Naive thymus-derived CD4-positive, alpha-beta T cell (primary cell): ENCODE measurements at regions of chrX and their contacts with region 1.

Region 1: DNA sequence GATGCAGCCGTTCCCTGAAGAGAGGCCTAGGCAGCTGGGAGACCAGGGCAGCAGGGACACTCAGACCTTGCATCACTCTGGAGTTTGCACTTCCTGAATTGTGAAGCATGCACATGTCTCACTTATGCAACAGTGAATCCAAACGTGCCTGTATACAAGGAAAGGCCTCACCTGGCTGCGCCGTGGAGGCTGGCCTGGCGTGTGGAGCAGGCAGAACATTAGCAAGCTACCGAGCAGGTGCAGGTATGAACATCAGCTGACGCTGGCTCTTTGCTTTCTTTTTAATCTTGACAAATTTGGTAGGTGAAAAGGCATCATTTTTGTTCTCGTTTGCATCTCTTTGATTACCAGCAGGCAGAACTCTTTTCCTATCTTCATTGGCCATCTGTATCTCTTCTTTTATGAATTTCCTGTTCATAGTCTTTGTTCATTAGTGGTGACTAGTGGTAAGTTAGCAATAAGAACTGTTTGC is 37.1 kb upstream of the IRAK1 start:
- DNase-seq: peak in 6 of 9 donors; percentile 11 to 31 (median 21)
- ATAC-seq: peak; percentile 55
- H3K4me3 ChIP-seq: no peak overlapping the region
- H3K4me3 Mint-ChIP-seq: peak overlapping the region in 7 of 10 donors; percentile 3 to 59 (median 44)
- H3K27ac ChIP-seq: peak overlapping the region; percentile 23
- H3K27ac Mint-ChIP-seq: peak overlapping the region; percentile 34 to 85 (median 61)
- H3K4me1 ChIP-seq: peaks cover 3 to 24% of the 10 kb centered on the region in 2 donors
- H3K4me1 Mint-ChIP-seq: peaks cover 33 to 66% (median 58%) of the 10 kb centered on the region in 7 donors
- H3K27me3 ChIP-seq: no peaks in the 10 kb centered on the region
- H3K27me3 Mint-ChIP-seq: no peaks in the 10 kb centered on the region

Region 2: GRCh38 chrX:153989973-153990655 is 66.7 kb before region 1 on chrX:
- CTCF ChIA-PET with region 1: no interaction called
- POLR2A ChIA-PET with region 1: no interaction called
- intact Hi-C with region 1: no loop called
- DNase-seq: peak in 3 of 9 donors; percentile 33 to 41 (median 35)
- ATAC-seq: peak; percentile 20
- H3K4me3 ChIP-seq: no peak overlapping the region
- H3K4me3 Mint-ChIP-seq: peak overlapping the region in 8 of 10 donors; percentile 39 to 75 (median 62)
- H3K27ac ChIP-seq: peak overlapping the region; percentile 42
- H3K27ac Mint-ChIP-seq: peak overlapping the region; percentile 55 to 91 (median 85)
- H3K4me1 ChIP-seq: peaks cover 2 to 14% of the 10 kb centered on the region in 2 donors
- H3K4me1 Mint-ChIP-seq: peaks cover 7 to 31% (median 16%) of the 10 kb centered on the region in 7 donors
- H3K27me3 ChIP-seq: no peaks in the 10 kb centered on the region
- H3K27me3 Mint-ChIP-seq: no peaks in the 10 kb centered on the region

Region 3: DNA sequence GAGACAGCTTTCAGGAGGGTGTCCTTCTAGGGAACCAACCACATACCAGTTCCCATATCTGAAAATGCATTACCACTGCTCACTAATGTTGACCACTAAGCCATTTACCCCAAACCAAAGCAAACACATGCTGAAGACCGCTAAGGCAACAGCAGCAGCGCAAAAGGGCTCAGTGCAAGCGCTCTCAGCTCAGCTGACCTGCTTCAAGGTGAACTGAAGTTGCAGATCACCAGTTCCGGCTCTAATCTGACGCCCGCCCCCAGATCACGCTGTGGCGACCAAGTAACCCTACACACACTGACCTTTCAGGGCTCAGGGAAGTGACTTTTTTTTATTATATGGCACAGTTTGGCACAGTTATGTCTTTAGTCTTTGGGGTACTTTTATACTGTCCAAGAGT is 34.9 kb after region 1 on chrX:
- CTCF ChIA-PET with region 1: no interaction called
- POLR2A ChIA-PET with region 1: interaction called, 3 read pairs
- intact Hi-C with region 1: loop called in 1 of 2 experiments (anchors 5 kb)
- DNase-seq: no peak
- ATAC-seq: no peak
- H3K4me3 ChIP-seq: peak overlapping the region; percentile 28
- H3K4me3 Mint-ChIP-seq: peak overlapping the region in 3 of 10 donors; percentile 1 to 97 (median 47)
- H3K27ac ChIP-seq: no peak overlapping the region
- H3K27ac Mint-ChIP-seq: peak overlapping the region in 1 of 9 donors; percentile 41
- H3K4me1 ChIP-seq: peaks cover 27 to 38% of the 10 kb centered on the region in 2 donors
- H3K4me1 Mint-ChIP-seq: peaks cover 21 to 77% (median 60%) of the 10 kb centered on the region in 7 donors
- H3K27me3 ChIP-seq: no peaks in the 10 kb centered on the region
- H3K27me3 Mint-ChIP-seq: no peaks in the 10 kb centered on the region